ENCODE measurements at regions of chr7 and their contacts with region 1.

Region 1: GRCh38 chr7:130010689-130011412 is 40.3 kb downstream of the ZC3HC1 start:
- DNase-seq: peak; percentile 81
- H3K4me3 ChIP-seq: no peak overlapping the region
- H3K27ac ChIP-seq: no peak overlapping the region
- H3K4me1 ChIP-seq: peaks cover 6% of the 10 kb centered on the region
- CTCF ChIP-seq: peak; percentile 83

Region 2: GRCh38 chr7:129664029-129665012 is 346.5 kb before region 1 on chr7:
- CTCF ChIA-PET with region 1: no interaction called
- POLR2A ChIA-PET with region 1: no interaction called
- intact Hi-C with region 1: loop called (anchors 5 kb)
- DNase-seq: peak; percentile 42
- H3K4me3 ChIP-seq: no peak overlapping the region
- H3K27ac ChIP-seq: no peak overlapping the region
- H3K4me1 ChIP-seq: no peaks in the 10 kb centered on the region
- CTCF ChIP-seq: peak; percentile 73

Region 3: DNA sequence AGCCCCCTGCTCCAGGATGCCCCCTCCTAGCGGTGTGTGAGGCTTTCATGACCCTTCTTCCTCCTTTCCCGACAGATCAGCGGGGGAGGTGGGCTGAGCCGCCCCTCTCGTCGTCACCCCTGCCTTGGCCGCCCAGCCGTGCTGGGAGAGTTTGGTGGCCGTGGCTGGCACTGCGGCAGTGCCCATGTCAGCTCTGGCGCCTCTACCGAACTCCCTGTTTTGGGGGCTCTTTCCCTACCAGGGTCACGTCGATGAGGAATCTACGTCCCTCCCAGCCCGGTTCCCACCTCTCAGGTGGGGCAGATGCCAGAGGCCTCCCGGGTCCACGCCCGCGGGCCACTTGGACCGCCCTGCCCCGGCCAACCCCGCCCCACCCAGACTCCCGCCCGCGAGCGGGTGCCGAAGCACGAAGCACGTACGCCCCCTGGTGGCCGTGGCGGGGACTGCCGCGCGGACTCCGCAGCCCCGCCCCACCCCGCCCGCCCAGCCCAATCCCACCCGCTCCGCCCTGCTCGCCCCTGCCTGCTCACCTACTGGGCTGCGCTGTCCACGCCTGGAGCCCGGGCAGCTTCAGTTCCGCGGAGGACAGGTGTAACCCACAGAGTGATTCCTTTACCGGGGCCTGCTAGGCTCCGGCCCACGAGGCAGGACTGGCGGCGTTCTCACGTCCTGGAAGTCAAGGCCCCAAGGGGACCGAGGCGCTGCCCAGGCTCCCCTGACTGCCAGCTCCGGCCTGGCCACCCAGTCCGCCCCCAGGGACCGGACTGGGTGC is 185.2 kb before region 1 on chr7:
- CTCF ChIA-PET with region 1: no interaction called
- POLR2A ChIA-PET with region 1: interaction called, 3 read pairs
- intact Hi-C with region 1: loop called (anchors 1 kb)
- DNase-seq: peak; percentile 78
- H3K4me3 ChIP-seq: peak overlapping the region; percentile 74
- H3K27ac ChIP-seq: no peak overlapping the region
- H3K4me1 ChIP-seq: peaks cover 4% of the 10 kb centered on the region
- CTCF ChIP-seq: peak; percentile 64

Region 4: GRCh38 chr7:129933627-129934026 is 77.2 kb before region 1 on chr7:
- CTCF ChIA-PET with region 1: interaction called, 6 read pairs
- POLR2A ChIA-PET with region 1: no interaction called
- intact Hi-C with region 1: loop called (anchors 1 kb)
- DNase-seq: no peak
- H3K4me3 ChIP-seq: no peak overlapping the region
- H3K27ac ChIP-seq: no peak overlapping the region
- H3K4me1 ChIP-seq: peaks cover 14% of the 10 kb centered on the region
- CTCF ChIP-seq: no peak

Region 5: DNA sequence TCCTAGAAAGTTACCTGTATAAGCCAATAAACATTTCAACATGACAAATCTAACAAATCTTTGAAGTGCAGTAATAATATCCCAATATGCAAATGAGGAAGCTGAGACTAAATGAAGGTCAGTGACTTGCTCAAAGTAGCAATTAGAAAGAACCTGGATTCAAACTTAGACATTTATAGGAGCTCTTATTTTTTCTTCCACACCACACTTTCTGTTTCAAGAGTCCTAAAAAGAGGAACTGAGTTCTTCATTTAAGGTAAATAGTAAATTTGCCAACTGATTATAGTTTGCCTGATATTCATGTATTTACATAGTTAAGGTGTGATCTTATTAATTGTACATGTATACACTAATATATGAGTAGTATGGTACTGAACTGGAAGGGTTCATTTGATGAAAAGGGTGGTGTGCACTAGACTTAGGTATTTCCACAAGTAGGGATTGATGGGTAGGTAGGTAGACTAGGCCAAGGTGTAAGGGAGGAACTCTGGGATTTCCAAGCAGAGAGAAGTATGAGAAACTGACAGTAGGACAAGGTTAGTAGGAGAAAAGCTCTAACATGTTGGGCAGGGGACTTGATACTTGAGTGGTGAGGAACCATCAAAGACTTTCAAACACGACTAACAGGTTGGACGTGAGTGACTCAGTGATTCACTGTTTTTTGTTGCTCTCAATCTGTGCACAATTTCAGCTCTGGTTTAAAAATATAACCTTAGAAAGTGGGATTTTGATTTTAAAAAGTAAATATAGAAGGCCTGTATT is 103.7 kb after region 1 on chr7:
- CTCF ChIA-PET with region 1: no interaction called
- POLR2A ChIA-PET with region 1: no interaction called
- intact Hi-C with region 1: no loop called
- DNase-seq: peak; percentile 35
- H3K4me3 ChIP-seq: no peak overlapping the region
- H3K27ac ChIP-seq: no peak overlapping the region
- H3K4me1 ChIP-seq: peaks cover 18% of the 10 kb centered on the region
- CTCF ChIP-seq: no peak

Measured in OCI-LY7 (cell line).